K562 (cell line): ENCODE measurements at regions of chr20 and their contacts with region 1.

Region 1: DNA sequence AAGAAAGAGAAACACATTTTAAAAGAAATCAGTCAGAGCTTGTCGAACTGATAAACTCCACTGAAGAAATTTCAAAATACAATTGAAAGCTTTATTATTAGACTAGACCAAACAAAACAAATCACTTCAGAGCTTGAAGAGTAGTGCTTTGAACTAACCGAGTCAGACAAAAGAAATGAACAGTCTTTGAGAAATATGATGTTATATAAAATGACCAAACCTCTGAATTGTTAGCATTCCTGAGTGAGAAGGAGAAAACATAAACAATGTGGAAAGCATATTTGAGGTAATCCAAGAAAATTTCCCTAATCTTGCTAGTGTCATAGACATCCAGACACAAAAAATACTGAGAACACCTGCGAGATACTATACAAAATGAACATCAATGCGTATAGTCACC is 13.2 kb upstream of the CST4 start:
- DNase-seq: no peak
- ATAC-seq: no peak
- H3K4me3 ChIP-seq: no peak overlapping the region
- H3K27ac ChIP-seq: no peak overlapping the region
- H3K4me1 ChIP-seq: no peaks in the 10 kb centered on the region
- H3K27me3 ChIP-seq: no peaks in the 10 kb centered on the region
- CTCF ChIP-seq: no peak
- EP300 ChIP-seq: no peak
- POLR2A ChIP-seq: no peak
- RAD21 ChIP-seq: no peak

Region 2: DNA sequence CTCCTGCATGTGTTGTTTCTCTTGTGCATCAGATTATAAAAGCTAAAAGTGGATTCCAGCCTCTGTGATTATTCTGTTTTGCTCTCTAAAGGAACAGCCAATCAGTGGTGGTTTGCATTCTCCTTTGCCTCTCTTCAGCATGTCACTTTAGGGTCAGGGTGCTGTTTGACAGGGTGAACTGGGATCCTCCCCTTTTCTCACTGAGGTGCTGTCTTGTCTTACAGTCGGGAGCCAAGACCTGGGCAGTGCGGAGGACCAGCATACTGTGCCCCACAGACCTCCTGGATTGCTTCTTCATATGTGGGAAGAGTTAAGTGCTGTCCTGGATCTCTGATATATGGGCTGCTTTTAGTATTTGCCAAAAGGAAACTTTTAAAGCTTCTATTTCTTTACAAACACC is 139.7 kb after region 1 on chr20:
- CTCF ChIA-PET with region 1: no interaction called
- POLR2A ChIA-PET with region 1: no interaction called
- in situ Hi-C with region 1: loop called (anchors 5 kb)
- intact Hi-C with region 1: no loop called
- DNase-seq: no peak
- ATAC-seq: no peak
- H3K4me3 ChIP-seq: no peak overlapping the region
- H3K27ac ChIP-seq: no peak overlapping the region
- H3K4me1 ChIP-seq: no peaks in the 10 kb centered on the region
- H3K27me3 ChIP-seq: no peaks in the 10 kb centered on the region
- CTCF ChIP-seq: no peak
- EP300 ChIP-seq: no peak
- POLR2A ChIP-seq: no peak
- RAD21 ChIP-seq: no peak